Mammary epithelial cell (primary cell): ENCODE measurements at regions of chr20 and their contacts with region 1.

Region 1: DNA sequence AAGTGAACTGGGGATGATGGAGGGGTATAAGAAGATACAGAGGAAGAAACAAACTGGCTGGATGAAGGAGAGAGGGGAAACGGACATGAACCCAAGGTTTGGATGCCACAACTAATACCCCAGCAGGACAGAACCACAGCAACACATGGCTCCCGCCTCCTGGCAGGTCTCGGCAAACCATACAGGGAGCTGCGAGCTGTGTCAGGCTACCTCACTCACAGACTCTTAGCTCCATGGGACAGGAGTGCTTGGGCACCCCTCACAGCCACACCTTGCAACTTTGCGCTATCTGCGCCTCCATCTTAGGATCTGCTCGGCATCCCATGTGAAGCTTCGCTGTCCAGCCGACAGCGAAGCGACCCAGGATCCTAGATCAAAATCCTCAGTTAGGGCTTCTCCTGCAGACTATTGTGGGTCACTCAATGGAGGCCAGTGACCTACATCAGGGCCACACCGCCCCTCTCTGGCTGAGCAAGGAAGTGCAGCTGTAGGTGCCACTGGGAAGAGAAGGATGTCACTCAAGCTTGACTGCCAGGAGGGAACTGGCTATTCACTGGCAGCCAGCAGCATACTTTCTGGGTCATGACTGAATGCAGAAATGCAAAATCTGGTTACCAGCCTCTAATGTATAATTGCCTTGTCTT is 174.4 kb upstream of the RIN2 start:
- DNase-seq: peak; percentile 22
- H3K4me3 ChIP-seq: no peak overlapping the region
- H3K27ac ChIP-seq: no peak overlapping the region
- H3K4me1 ChIP-seq: no peaks in the 10 kb centered on the region
- H3K27me3 ChIP-seq: no peaks in the 10 kb centered on the region
- CTCF ChIP-seq: peak; percentile 87 to 88

Region 2: GRCh38 chr20:19205977-19206396 is 377.7 kb before region 1 on chr20:
- CTCF ChIA-PET with region 1: no interaction called
- dilution Hi-C with region 1: no loop called
- in situ Hi-C with region 1: loop called in 1 of 2 experiments (anchors 5 kb)
- intact Hi-C with region 1: loop called (anchors 1 kb)
- DNase-seq: peak; percentile 32
- H3K4me3 ChIP-seq: no peak overlapping the region
- H3K27ac ChIP-seq: no peak overlapping the region
- H3K4me1 ChIP-seq: no peaks in the 10 kb centered on the region
- H3K27me3 ChIP-seq: peaks cover 7% of the 10 kb centered on the region
- CTCF ChIP-seq: peak; percentile 81 to 89

Region 3: DNA sequence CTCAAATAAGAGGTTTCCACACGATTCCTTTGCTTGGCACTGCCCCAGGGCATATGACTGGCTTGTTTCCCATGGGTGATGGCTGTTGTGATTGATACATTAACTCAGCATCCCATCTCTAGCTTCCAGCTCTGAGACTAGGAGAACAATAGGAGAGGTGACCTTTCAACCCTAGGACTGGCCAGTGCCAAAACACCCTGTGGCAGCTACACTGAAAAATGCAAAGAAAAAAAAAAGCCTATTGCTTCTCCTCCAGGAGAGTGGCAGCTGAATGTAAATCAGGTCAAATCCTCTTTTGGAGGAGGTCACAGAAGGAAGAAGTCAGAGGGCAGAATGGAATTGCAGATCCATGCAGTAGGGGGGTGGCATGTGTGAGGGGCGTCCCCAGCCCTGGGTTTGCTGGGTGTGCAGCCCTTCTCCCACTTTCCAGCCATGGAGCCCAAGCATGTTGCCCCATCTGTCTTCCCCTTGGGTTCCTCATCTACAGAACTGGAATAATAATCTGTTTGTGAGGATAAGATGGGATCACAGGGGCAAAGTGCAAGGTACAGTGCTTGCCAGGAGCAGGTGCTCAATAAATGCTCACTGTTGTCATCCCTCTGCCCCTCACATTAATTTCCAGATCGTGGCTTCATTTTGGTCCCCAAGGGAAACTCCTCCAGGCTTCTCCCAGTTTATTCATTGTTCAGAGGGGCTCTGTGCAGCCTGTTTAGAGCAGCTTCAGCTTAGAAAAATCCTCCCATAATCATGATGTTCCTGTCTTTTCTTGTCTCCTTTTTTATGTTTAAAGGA is 70.6 kb before region 1 on chr20:
- CTCF ChIA-PET with region 1: no interaction called
- dilution Hi-C with region 1: loop called (anchors 5 kb)
- in situ Hi-C with region 1: no loop called
- intact Hi-C with region 1: no loop called
- DNase-seq: no peak
- H3K4me3 ChIP-seq: no peak overlapping the region
- H3K27ac ChIP-seq: no peak overlapping the region
- H3K4me1 ChIP-seq: no peaks in the 10 kb centered on the region
- H3K27me3 ChIP-seq: no peaks in the 10 kb centered on the region
- CTCF ChIP-seq: no peak

Region 4: DNA sequence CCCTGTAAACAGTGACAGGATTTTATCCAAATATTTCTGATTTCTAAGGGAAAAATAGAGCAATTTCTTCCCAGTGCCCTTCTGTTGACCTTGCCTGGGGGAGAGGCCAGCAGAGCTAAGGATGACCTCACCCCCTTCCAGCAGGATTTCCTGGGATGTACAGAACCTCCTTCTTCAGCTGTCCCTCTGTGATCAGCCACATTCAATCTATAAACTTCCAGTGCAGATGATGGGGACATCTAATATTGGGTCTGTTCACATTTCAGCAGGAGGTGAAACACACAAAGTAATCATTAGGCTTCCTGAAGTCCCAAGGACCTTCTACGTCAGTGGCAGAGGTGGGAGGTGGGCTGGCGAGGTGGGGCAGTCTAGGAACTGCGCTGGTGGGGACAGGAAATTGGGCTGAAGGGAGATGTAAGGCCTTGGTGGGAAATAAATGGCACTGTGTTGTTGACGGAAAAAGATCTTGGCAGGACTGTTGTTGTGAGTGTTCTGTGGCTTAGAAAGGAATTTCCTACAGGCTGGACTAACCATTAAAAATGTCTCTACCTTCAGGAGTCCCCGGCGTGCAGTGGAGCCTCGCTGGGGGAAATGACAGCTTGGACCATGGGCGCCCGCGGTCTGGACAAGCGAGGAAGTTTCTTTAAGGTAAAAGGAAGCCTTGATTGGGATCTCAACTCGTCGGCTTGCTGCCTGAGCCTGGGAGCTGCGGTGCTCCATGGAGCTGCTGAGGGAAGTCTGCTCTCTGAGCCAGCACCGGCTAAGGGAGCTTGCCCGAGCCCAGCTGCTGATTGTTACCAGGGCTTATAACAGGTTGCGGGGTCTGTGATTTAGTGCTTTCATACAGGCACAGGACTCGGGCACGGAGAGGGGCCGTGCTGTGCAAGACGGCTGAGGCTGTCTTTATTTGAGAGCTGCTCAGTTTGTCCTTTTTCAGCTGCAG is 305.6 kb after region 1 on chr20:
- CTCF ChIA-PET with region 1: no interaction called
- dilution Hi-C with region 1: no loop called
- in situ Hi-C with region 1: no loop called
- intact Hi-C with region 1: no loop called
- DNase-seq: peak; percentile 56
- H3K4me3 ChIP-seq: peak overlapping the region; percentile 25 to 39 (median 31)
- H3K27ac ChIP-seq: peak overlapping the region; percentile 64
- H3K4me1 ChIP-seq: peaks cover 59% of the 10 kb centered on the region
- H3K27me3 ChIP-seq: no peaks in the 10 kb centered on the region
- CTCF ChIP-seq: no peak

Region 5: GRCh38 chr20:20338133-20338730 is 754.6 kb after region 1 on chr20:
- CTCF ChIA-PET with region 1: no interaction called
- dilution Hi-C with region 1: no loop called
- in situ Hi-C with region 1: no loop called
- intact Hi-C with region 1: no loop called
- DNase-seq: no peak
- H3K4me3 ChIP-seq: no peak overlapping the region
- H3K27ac ChIP-seq: no peak overlapping the region
- H3K4me1 ChIP-seq: no peaks in the 10 kb centered on the region
- H3K27me3 ChIP-seq: peaks cover 2% of the 10 kb centered on the region
- CTCF ChIP-seq: no peak